ENCODE measurements at regions of chr6 and their contacts with region 1.

Region 1: DNA sequence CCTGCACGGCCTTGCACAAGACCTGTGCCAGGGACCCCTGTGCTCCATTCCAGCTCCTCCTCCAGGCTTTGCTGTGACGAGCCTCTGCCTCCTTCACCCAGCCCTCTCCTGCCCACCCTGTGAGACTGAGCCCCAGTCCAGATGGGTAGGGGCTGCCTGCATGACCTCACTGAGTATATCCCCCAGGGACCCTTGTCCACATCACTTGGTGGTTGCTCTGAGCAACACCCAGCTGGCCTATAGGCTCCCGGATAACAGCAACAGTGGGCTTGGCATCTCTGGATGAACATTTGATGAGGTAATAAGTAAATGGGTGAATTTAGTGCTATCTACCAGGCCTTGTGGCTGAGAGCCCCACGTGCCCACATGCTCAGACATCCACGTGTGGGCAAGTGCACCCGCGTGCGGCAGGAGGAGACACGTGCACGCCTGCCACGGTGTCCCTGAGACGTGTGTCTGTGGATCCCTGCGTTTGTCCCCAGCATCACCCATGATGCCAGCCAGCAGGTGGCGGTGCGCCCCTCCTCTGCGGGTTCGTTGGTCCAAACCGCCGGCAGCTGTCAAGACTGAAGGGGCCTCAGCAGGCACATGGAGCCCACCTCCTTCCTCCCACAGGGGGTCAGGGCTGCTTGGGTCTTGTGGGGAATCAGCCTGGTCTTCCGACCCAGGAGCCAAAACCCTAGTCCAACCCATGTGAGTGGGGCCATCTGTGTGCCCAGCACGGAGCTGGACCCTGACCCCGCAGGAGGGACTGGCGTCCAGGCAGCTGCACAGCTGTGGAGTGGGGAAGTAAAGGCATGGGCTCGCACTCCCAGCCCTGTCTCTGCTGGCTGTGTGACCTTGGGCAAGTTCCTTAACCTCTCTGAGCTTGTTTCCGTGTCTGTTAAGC is 45.9 kb downstream of the FGD2 start:
- DNase-seq: peak; percentile 81 to 96 (median 89)
- ATAC-seq: peak; percentile 58 to 84 (median 81)
- H3K4me3 ChIP-seq: no peak overlapping the region
- H3K27ac ChIP-seq: peak overlapping the region in 1 of 4 donors; percentile 8
- H3K4me1 ChIP-seq: peaks cover 22 to 45% (median 29%) of the 10 kb centered on the region in 3 donors
- H3K27me3 ChIP-seq: no peaks in the 10 kb centered on the region
- CTCF ChIP-seq: peak; percentile 58 to 81 (median 76)

Region 2: DNA sequence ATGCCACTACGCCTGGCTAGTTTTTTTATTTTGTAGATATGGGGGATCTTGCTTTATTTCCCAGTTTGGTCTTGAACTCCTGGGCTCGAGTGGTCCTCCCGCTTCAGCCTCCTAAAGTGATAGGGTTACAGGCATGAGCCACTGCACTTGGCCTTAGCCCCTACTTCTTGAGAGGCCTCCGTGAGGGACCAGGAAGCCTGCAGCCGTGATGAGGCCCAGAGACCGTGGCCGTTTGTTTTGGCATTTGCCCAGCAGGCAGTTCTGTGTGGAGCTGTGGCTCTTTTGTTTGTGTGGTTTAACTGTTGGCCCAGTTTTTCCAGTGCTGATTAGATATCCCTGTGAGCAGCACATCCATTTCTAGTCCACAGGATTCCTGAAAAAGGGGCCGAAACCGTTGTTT is 417.5 kb before region 1 on chr6:
- intact Hi-C with region 1: no loop called
- DNase-seq: peak; percentile 82 to 94 (median 86)
- ATAC-seq: peak; percentile 92 to 97 (median 94)
- H3K4me3 ChIP-seq: no peak overlapping the region
- H3K27ac ChIP-seq: peak overlapping the region in 3 of 4 donors; percentile 8 to 36 (median 33)
- H3K4me1 ChIP-seq: peaks cover 9 to 15% (median 14%) of the 10 kb centered on the region in 3 donors
- H3K27me3 ChIP-seq: no peaks in the 10 kb centered on the region
- CTCF ChIP-seq: no peak

Region 3: GRCh38 chr6:37102279-37103168 is 51.1 kb after region 1 on chr6:
- intact Hi-C with region 1: no loop called
- DNase-seq: peak; percentile 82 to 92 (median 86)
- ATAC-seq: peak; percentile 65 to 81 (median 74)
- H3K4me3 ChIP-seq: peak overlapping the region; percentile 9 to 42 (median 30)
- H3K27ac ChIP-seq: peak overlapping the region; percentile 71 to 92 (median 88)
- H3K4me1 ChIP-seq: peaks cover 17 to 32% (median 17%) of the 10 kb centered on the region in 3 donors
- H3K27me3 ChIP-seq: no peaks in the 10 kb centered on the region
- CTCF ChIP-seq: no peak

Region 4: DNA sequence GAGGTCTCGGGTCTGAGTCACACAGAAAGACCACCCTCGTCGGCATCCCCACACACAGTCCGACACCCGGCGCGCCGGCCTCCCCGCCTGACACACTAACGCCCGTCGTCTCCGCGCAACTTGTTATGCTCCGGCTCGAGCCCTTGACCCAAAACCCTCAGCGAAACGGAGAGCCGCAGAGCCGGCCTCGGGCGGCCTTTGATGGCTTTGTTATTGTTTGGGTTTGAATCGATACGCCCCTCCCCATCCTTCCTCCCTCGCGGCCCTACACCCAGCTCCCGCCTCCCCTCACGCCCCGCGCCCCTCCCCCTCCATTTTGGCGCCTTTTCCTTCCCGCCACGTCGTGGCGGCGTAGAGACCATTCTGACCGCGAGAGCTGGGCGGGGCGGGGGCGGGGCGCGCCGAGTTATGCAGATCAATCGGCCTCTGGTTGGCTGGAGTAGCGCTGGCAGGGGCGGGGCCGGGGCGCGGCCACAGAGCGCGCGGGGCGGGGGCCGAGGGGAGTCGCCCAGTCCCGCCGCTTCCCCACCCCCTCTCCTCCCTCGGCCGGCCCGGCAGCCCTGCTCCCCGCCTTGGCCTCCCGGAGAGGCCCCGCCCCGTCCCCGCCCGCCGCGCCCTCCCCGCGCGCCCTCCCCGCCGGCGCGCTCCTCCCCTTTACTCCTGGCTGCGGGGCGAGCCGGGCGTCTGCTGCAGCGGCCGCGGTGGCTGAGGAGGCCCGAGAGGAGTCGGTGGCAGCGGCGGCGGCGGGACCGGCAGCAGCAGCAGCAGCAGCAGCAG is 118.3 kb after region 1 on chr6 and contains the start of gene PIM1:
- intact Hi-C with region 1: loop called in 2 of 3 experiments (anchors 2 to 5 kb)
- DNase-seq: peak; percentile 99 to 100 (median 99)
- ATAC-seq: peak; percentile 80 to 89 (median 88)
- H3K4me3 ChIP-seq: peak within 1 kb of the TSS; percentile 81 to 98 (median 96)
- H3K27ac ChIP-seq: peak within 1 kb of the TSS; percentile 64 to 87 (median 82)
- H3K4me1 ChIP-seq: peaks cover 0 to 13% (median 9%) of the 10 kb centered on the region in 3 donors
- H3K27me3 ChIP-seq: no peaks in the 10 kb centered on the region
- CTCF ChIP-seq: no peak
- total RNA-seq, gene PIM1: 7.5 to 25.3 (median 14.1) TPM

Region 5: GRCh38 chr6:37207903-37208456 is 156.6 kb after region 1 on chr6:
- intact Hi-C with region 1: loop called in 1 of 3 experiments (anchors 10 kb)
- DNase-seq: peak; percentile 67 to 89 (median 84)
- ATAC-seq: peak; percentile 53 to 83 (median 81)
- H3K4me3 ChIP-seq: no peak overlapping the region
- H3K27ac ChIP-seq: no peak overlapping the region
- H3K4me1 ChIP-seq: no peaks in the 10 kb centered on the region
- H3K27me3 ChIP-seq: no peaks in the 10 kb centered on the region
- CTCF ChIP-seq: peak; percentile 25 to 67 (median 52)

Measured in pancreas (tissue), 10 donors.